Activated CD4-positive, alpha-beta T cell treated with anti-CD3 and anti-CD28 coated beads, Interleukin-2, amount 10 ng/mL, durations not matched to agents 24 days and 14 days (primary cell): ENCODE measurements at regions of chr5 and their contacts with region 1.

Region 1: DNA sequence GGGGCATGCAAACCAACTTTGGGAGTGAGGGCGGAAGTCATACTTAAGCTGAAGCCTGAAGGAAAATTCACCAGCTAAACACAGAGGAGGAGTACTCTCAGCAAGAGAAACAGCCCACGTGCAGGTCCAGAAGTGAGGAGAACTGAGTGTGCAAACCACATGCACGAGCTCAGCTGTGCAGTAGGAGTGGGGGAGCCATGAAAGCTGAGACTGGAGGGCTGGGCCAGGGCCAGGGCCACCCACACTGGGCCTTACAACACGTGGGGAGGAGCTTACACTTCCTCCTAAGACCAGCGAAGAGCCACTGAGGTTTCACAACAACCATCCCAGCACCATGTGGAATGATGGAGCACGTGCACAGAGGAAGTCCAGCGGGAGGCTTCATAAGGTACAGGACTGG is 9.3 kb upstream of the WWC1 start:
- DNase-seq: no peak
- H3K4me3 Mint-ChIP-seq: no peak overlapping the region
- H3K27ac Mint-ChIP-seq: no peak overlapping the region
- H3K4me1 Mint-ChIP-seq: peaks cover 3% of the 10 kb centered on the region
- H3K27me3 Mint-ChIP-seq: peaks cover 15% of the 10 kb centered on the region

Region 2: DNA sequence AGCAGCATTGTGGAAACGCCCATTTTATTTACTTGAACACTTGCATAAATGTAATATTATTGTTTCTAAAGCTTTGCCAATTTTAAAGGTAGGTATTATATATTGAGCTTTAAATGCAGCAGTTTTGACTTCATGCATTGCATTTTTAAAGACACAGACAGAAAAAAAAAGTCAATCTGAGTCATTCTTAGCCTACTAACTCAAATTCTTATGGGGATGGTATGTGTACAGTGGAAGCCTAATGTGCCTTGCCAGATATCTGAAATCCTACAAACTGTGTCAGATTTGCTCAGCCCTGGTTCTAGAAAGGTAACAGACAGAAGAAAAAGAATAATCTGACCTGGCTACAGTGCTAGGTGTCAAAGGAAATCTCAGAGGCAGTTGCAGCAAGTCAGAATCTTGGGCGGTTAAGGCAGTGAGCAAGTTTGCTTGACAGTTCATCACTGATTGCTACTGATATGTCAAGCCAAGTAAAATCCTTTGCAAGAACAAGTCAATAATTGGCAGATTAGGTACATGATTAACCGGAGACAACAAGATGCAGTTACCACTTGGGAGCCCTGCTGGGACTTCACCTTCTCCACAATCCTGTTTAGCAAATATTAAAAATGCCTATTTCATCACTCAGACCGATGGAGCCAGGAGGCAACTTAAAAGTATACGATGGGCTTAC is 215.4 kb before region 1 on chr5:
- intact Hi-C with region 1: no loop called
- DNase-seq: no peak
- H3K4me3 Mint-ChIP-seq: no peak overlapping the region
- H3K27ac Mint-ChIP-seq: no peak overlapping the region
- H3K4me1 Mint-ChIP-seq: no peaks in the 10 kb centered on the region
- H3K27me3 Mint-ChIP-seq: no peaks in the 10 kb centered on the region

Region 3: GRCh38 chr5:168409580-168410458 is 127.7 kb after region 1 on chr5:
- intact Hi-C with region 1: loop called (anchors 10 kb)
- DNase-seq: peak; percentile 62
- H3K4me3 Mint-ChIP-seq: peak overlapping the region; percentile 53
- H3K27ac Mint-ChIP-seq: no peak overlapping the region
- H3K4me1 Mint-ChIP-seq: peaks cover 18% of the 10 kb centered on the region
- H3K27me3 Mint-ChIP-seq: peaks cover 43% of the 10 kb centered on the region

Region 4: GRCh38 chr5:168424594-168425323 is 142.6 kb after region 1 on chr5:
- intact Hi-C with region 1: no loop called
- DNase-seq: no peak
- H3K4me3 Mint-ChIP-seq: no peak overlapping the region
- H3K27ac Mint-ChIP-seq: no peak overlapping the region
- H3K4me1 Mint-ChIP-seq: no peaks in the 10 kb centered on the region
- H3K27me3 Mint-ChIP-seq: peaks cover 7% of the 10 kb centered on the region